ENCODE measurements at regions of chr18 and their contacts with region 1.

Region 1: GRCh38 chr18:50757358-50757757 is 62.5 kb downstream of the MRO start:
- DNase-seq: no peak
- H3K4me3 Mint-ChIP-seq: no peak overlapping the region
- H3K27ac Mint-ChIP-seq: no peak overlapping the region
- H3K4me1 Mint-ChIP-seq: no peaks in the 10 kb centered on the region
- H3K27me3 Mint-ChIP-seq: peaks cover 97% of the 10 kb centered on the region
- CTCF ChIP-seq: no peak

Region 2: DNA sequence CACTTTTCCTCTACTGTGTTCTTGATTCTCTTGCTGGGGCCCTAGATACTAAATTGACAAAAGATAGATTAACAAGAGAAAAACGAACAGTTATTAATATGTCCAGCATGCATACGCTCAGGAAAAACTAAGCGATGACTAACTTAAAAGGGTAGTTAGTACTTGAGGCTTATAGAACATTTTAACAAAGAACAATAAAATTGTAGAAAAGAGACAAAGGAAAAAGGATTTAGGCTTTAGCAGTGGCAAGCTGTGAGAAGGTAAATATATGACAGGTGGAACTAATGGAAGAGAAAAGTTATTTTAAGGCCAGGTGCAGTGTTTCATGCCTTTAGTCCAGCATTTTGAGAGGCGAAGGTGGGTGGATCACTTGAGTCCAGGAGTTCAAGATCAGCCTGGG is 13.1 kb before region 1 on chr18:
- CTCF ChIA-PET with region 1: interaction called, 13 read pairs
- intact Hi-C with region 1: no loop called
- DNase-seq: no peak
- H3K4me3 Mint-ChIP-seq: no peak overlapping the region
- H3K27ac Mint-ChIP-seq: no peak overlapping the region
- H3K4me1 Mint-ChIP-seq: no peaks in the 10 kb centered on the region
- H3K27me3 Mint-ChIP-seq: peaks cover 86% of the 10 kb centered on the region
- CTCF ChIP-seq: no peak